ENCODE measurements at regions of chr6 and their contacts with region 1.

Region 1: GRCh38 chr6:111873178-111874024 is at the start of gene FYN:
- DNase-seq: peak; percentile 98
- H3K4me3 Mint-ChIP-seq: peak within 1 kb of the TSS; percentile 99
- H3K27ac Mint-ChIP-seq: peak within 1 kb of the TSS; percentile 96
- H3K4me1 Mint-ChIP-seq: peaks cover 44% of the 10 kb centered on the region
- H3K27me3 Mint-ChIP-seq: peaks cover 6% of the 10 kb centered on the region
- total RNA-seq, gene FYN: 347 and 355 TPM in 2 replicates

Region 2: GRCh38 chr6:110815217-110816109 is 1057.9 kb before region 1 on chr6 and contains the start of gene CDK19:
- intact Hi-C with region 1: loop called (anchors 2 kb)
- DNase-seq: peak; percentile 97
- H3K4me3 Mint-ChIP-seq: peak within 1 kb of the TSS; percentile 97
- H3K27ac Mint-ChIP-seq: peak within 1 kb of the TSS; percentile 98
- H3K4me1 Mint-ChIP-seq: peaks cover 38% of the 10 kb centered on the region
- H3K27me3 Mint-ChIP-seq: no peaks in the 10 kb centered on the region
- total RNA-seq, gene CDK19: 12.4 and 13.7 TPM in 2 replicates

Region 3: GRCh38 chr6:111709615-111710398 is 163.6 kb before region 1 on chr6:
- intact Hi-C with region 1: loop called (anchors 1 kb)
- DNase-seq: peak; percentile 41
- H3K4me3 Mint-ChIP-seq: peak overlapping the region; percentile 45
- H3K27ac Mint-ChIP-seq: peak overlapping the region; percentile 44
- H3K4me1 Mint-ChIP-seq: peaks cover 66% of the 10 kb centered on the region
- H3K27me3 Mint-ChIP-seq: no peaks in the 10 kb centered on the region

Region 4: DNA sequence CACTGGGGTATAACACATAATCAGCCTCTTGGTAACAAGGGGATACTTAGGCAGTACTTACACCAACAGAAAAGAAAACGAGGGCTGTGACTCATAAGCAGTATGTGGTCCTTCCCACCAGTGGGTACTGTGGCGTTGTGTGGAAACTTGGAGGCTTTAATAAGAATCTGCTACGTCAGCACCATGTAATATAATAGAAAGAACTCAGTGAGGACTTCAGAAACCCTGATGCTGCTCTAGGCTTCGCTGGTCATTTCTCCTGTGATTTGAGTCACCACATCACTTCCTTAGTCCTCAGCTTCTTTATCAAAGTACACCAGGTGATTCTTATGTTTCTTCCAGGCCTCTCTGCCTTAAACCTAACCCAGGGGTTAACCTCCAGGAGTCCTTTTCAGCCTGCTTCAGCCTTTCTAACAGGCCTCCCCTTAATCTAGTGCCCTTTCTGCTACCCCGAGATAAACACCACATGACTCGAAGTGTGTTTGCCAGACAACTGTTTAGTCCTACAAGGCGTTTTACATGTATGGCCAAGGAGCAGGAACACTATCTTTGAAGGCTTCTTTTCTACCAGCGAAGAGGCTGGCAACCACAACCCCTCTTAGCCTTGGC is 68.7 kb before region 1 on chr6:
- intact Hi-C with region 1: loop called (anchors 1 kb)
- DNase-seq: peak; percentile 67
- H3K4me3 Mint-ChIP-seq: peak overlapping the region; percentile 74
- H3K27ac Mint-ChIP-seq: peak overlapping the region; percentile 98
- H3K4me1 Mint-ChIP-seq: peaks cover 84% of the 10 kb centered on the region
- H3K27me3 Mint-ChIP-seq: no peaks in the 10 kb centered on the region

Region 5: DNA sequence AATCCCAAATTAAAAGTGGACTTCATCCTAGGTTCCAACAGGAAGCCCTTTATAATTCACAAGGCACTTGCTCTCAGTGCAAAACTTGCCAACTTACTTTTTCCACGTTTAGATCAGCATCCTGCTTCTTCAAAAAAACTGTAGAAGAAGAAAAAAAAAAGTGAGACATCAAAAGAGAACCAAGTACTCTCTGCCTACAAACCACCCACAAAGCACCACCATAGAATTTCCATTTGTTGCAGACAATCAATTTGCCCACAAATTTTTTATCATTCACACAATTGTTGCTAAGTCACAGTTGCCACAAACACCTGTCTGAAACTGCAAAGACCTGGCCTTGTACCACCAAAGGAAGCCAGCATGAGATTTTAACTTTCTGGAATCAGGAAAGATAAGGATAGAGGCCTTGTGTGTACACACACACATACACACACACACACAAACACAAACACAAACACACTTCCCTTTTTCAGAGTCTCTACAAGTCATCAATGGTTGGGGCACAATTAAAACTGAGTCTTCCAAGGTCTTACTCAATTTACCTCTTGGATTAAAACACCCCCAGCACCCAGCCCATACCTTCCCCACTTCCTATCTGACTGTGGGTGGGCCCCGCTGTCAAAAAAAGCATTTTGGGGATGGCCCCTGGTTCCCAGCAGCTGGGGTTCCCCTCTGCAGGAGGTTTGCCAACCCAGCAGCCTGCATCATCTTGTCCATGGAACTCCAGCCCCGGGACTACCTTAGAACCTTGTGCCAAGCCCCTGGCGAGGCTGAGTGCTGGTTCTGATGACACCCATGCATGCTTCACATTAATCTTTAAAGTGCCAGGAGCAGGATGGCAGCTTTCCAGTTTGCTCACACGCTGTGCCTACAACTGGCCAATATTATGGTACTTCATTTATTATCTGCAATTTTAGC is 26.6 kb before region 1 on chr6:
- intact Hi-C with region 1: loop called (anchors 1 kb)
- DNase-seq: peak; percentile 35
- H3K4me3 Mint-ChIP-seq: peak overlapping the region; percentile 65
- H3K27ac Mint-ChIP-seq: no peak overlapping the region
- H3K4me1 Mint-ChIP-seq: peaks cover 30% of the 10 kb centered on the region
- H3K27me3 Mint-ChIP-seq: no peaks in the 10 kb centered on the region

Region 6: GRCh38 chr6:111985202-111985731 is 111.9 kb after region 1 on chr6:
- intact Hi-C with region 1: loop called (anchors 1 kb)
- DNase-seq: no peak
- H3K4me3 Mint-ChIP-seq: peak overlapping the region; percentile 5
- H3K27ac Mint-ChIP-seq: peak overlapping the region; percentile 78
- H3K4me1 Mint-ChIP-seq: peaks cover 71% of the 10 kb centered on the region
- H3K27me3 Mint-ChIP-seq: no peaks in the 10 kb centered on the region

Measured in activated T-helper 1 cell treated with anti-CD3 and anti-CD28 coated beads, Interleukin-12 subunit alpha, Interleukin-12 subunit beta, Interleukin-2, Interleukin-4 antibody, amounts not matched to agents 30 ng/mL and 10 ng/mL and 1 ng/mL, durations not matched to agents 14 hours and 24 hours and 36 hours (primary cell).